HEK293 (cell line): ENCODE measurements at regions of chr6 and their contacts with region 1.

Region 1: DNA sequence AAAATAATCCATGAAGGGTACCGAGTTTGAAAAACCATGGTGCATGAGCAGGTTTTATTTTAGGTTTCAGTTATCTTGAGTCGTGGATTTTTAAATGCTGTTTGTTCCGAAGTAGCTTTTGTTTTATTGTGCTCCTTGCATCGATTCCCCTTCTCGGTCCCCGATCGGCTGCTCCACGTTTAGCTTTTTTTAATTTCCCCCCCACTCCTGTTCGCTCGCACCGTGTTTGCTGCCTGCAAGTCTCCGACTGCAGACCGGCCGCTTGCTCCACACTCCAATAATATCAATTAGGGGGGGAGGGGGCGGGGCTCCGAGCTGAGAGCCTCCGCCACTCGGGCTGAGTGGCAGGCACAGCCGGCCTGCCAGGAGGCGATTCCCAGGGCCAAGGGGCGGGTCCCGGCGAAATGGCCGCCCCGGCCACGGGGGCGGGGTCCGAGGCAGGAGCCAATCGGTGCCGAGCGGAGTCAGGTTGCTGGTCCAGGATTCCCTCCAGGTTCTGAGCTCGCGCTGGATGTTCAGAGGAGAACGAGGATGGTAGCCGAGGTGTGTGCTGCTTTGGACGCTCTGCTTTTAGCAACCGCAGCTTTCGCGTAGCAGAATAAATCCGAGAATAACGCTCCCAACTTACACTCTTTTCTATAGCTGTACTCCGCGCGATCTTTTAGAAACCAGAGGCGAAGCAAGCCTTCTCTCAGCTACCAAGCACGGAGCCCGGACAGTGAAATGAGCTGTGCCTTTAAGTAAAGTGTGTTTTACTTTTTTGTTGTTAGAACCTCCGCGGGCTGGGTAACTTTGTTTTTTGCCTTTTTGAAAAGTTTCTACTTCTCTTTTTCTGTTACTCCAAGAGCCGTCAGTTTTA is at the start of gene EPHA7:
- H3K4me3 ChIP-seq: peak within 1 kb of the TSS; percentile 75
- H3K27ac ChIP-seq: peak within 1 kb of the TSS; percentile 97
- H3K4me1 ChIP-seq: peaks cover 7% of the 10 kb centered on the region; the same call in 1 of the 2 replicates
- CTCF ChIP-seq: no peak

Region 2: GRCh38 chr6:92810913-92811312 is 608.6 kb before region 1 on chr6:
- CTCF ChIA-PET with region 1: interaction called, 25 read pairs
- POLR2A ChIA-PET with region 1: interaction called, 8 read pairs
- H3K4me3 ChIP-seq: no peak overlapping the region
- H3K27ac ChIP-seq: no peak overlapping the region
- H3K4me1 ChIP-seq: no peaks in the 10 kb centered on the region
- CTCF ChIP-seq: 0 out of 2 replicates have a peak, but pooled peaks have one; percentile 19

Region 3: GRCh38 chr6:93105017-93105416 is 314.5 kb before region 1 on chr6:
- CTCF ChIA-PET with region 1: interaction called, 4 read pairs
- POLR2A ChIA-PET with region 1: interaction called, 16 read pairs
- H3K4me3 ChIP-seq: no peak overlapping the region
- H3K27ac ChIP-seq: peak overlapping the region; percentile 32
- H3K4me1 ChIP-seq: peaks cover 13% of the 10 kb centered on the region; the same call in 1 of the 2 replicates
- CTCF ChIP-seq: no peak

Region 4: GRCh38 chr6:93366506-93366905 is 53.0 kb before region 1 on chr6:
- CTCF ChIA-PET with region 1: interaction called, 5 read pairs
- POLR2A ChIA-PET with region 1: interaction called, 10 read pairs
- H3K4me3 ChIP-seq: no peak overlapping the region
- H3K27ac ChIP-seq: no peak overlapping the region
- H3K4me1 ChIP-seq: peaks cover 2% of the 10 kb centered on the region
- CTCF ChIP-seq: no peak

Region 5: DNA sequence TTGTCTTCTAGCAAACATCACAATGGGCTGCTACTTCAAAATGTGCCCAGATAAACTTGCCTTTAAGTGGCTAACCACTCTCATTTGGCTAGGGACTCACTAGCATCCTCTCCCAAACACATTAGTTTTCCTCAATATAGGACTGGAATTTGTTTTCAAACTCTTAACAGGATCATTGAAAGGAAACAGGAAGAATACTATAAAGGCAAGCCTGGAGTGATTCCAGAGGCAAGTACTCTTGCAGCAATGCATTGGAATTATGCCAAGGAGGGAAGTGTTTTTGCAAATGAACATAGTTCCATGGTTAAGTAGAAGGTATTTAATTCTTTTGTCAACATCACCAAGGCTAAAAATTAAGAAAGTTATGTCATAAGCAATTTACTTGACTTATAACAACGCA is 12.3 kb before region 1 on chr6:
- CTCF ChIA-PET with region 1: interaction called, 6 read pairs
- POLR2A ChIA-PET with region 1: interaction called, 52 read pairs
- H3K4me3 ChIP-seq: no peak overlapping the region
- H3K27ac ChIP-seq: no peak overlapping the region
- H3K4me1 ChIP-seq: peaks cover 11% of the 10 kb centered on the region
- CTCF ChIP-seq: no peak

Region 6: DNA sequence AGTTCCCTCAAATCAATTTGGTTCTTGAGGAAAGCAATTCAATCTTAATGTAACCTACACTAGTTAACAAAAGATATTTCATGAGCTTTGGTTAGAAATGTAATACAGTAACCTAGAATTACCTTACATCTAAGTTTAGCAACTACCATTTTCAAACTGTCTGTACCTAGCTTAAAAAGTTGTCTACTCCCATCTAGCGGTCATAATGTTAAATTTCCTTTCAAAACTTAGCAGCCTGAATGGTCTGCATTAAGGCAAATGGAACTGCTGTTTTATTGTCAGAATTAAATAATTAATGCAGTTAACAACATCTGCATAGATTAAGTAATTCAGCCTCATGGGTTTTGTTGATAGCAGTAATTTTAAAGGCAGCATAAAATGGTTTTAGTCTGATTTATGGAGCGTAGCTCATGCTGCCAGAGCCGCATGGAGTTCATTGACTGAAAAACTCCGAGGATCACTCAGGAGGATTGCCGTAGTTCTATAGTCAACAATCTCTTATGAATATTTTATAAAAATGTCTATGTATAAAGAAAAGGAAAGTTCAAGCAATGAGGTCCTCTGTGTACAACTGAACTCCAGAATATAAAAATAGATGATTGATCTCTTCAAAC is 1672.4 kb after region 1 on chr6:
- CTCF ChIA-PET with region 1: interaction called, 10 read pairs
- POLR2A ChIA-PET with region 1: no interaction called
- H3K4me3 ChIP-seq: no peak overlapping the region
- H3K27ac ChIP-seq: no peak overlapping the region
- H3K4me1 ChIP-seq: no peaks in the 10 kb centered on the region
- CTCF ChIP-seq: 0 out of 2 replicates have a peak, but pooled peaks have one; percentile 20